ENCODE measurements at regions of chr14 and their contacts with region 1.

Region 1: GRCh38 chr14:99266181-99267178 is 5.5 kb downstream of the BCL11B start:
- DNase-seq: peak; percentile 79 to 95 (median 88)
- ATAC-seq: peak; percentile 25 to 42 (median 40)
- H3K4me3 ChIP-seq: peak overlapping the region; percentile 66 to 90
- H3K4me3 Mint-ChIP-seq: peak overlapping the region; percentile 94 to 98 (median 96)
- H3K27ac ChIP-seq: peak overlapping the region; percentile 99
- H3K27ac Mint-ChIP-seq: peak overlapping the region; percentile 99 to 100
- H3K4me1 ChIP-seq: peaks cover 33 to 54% of the 10 kb centered on the region in 2 experiments
- H3K4me1 Mint-ChIP-seq: peaks cover 60 to 72% (median 62%) of the 10 kb centered on the region in 3 donors
- H3K27me3 ChIP-seq: no peaks in the 10 kb centered on the region
- H3K27me3 Mint-ChIP-seq: no peaks in the 10 kb centered on the region

Region 2: DNA sequence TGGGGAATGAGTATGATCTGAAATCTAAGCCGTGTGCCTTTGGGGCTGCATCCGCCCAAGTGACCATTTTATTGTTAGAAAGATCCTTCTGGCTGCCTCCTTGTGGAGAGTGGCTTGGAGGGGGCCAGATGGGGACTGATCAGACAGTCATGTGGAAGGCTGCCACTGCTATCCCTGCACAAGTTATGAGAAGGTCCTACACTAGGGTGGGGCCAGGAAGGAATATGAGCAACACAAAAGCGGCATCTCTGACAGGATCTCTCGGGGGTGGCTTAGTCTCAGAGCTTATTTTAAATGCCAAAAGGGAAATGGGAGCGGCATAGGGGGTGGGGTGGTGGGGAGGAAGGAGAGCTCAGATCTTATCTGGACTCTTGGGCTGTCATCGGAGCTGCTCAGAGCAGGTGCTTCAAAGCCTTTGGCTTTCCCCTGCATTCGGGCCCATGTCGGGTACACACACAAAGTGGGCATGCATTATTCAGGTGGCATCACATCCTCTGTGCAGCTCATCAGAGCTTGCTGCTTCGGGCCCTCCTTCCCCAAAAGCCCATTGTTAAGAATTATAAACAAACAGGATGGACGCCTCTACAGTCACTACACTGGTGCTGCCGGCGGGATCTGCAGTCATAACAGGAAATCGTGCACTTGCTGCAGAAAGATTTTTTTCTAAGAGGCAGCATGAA is 1663.9 kb before region 1 on chr14:
- CTCF ChIA-PET with region 1: interaction called in 1 of 2 experiments, 3 read pairs
- POLR2A ChIA-PET with region 1: interaction called in 1 of 2 experiments, 11 read pairs
- DNase-seq: peak; percentile 67 to 92 (median 80)
- ATAC-seq: peak; percentile 91 to 92 (median 91)
- H3K4me3 ChIP-seq: peak overlapping the region; percentile 29 to 31
- H3K4me3 Mint-ChIP-seq: no peak overlapping the region
- H3K27ac ChIP-seq: peak overlapping the region; percentile 93
- H3K27ac Mint-ChIP-seq: no peak overlapping the region
- H3K4me1 ChIP-seq: peaks cover 40 to 50% of the 10 kb centered on the region in 2 experiments
- H3K4me1 Mint-ChIP-seq: peaks cover 6 to 40% (median 7%) of the 10 kb centered on the region in 3 donors
- H3K27me3 ChIP-seq: no peaks in the 10 kb centered on the region
- H3K27me3 Mint-ChIP-seq: no peaks in the 10 kb centered on the region

Region 3: DNA sequence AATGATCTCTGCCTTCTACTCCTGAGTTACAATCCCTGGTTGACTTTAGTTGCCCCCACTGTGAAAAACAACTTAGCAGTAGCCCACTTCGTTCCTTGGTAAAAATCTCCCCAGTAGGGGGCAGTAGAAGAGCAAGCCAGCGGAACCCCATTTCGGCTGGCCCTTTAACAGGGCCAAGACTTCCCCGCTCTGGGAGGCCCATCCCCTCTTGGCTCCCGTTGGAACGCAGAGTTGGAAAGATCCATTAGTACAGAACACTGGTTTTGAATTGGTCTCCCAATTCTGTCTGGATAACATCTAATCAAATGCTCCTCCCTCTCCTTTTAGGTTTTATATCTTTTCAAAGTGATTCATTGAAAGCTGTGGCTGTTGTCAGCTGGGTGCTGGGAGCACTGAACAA is 1127.8 kb before region 1 on chr14:
- CTCF ChIA-PET with region 1: interaction called in 1 of 2 experiments, 15 read pairs
- POLR2A ChIA-PET with region 1: interaction called in 1 of 2 experiments, 3 read pairs
- DNase-seq: peak; percentile 31 to 89 (median 57)
- ATAC-seq: peak; percentile 55 to 60 (median 56)
- H3K4me3 ChIP-seq: peak overlapping the region in 1 of 2 donors; percentile 5
- H3K4me3 Mint-ChIP-seq: peak overlapping the region; percentile 58 to 88 (median 79)
- H3K27ac ChIP-seq: peak overlapping the region; percentile 55
- H3K27ac Mint-ChIP-seq: peak overlapping the region; percentile 92 to 97
- H3K4me1 ChIP-seq: peaks cover 63 to 78% of the 10 kb centered on the region in 2 experiments
- H3K4me1 Mint-ChIP-seq: peaks cover 88 to 95% (median 95%) of the 10 kb centered on the region in 3 donors
- H3K27me3 ChIP-seq: no peaks in the 10 kb centered on the region
- H3K27me3 Mint-ChIP-seq: no peaks in the 10 kb centered on the region

Region 4: GRCh38 chr14:99224116-99224910 is 42.2 kb before region 1 on chr14:
- CTCF ChIA-PET with region 1: interaction called, 3 to 48 read pairs
- POLR2A ChIA-PET with region 1: interaction called, 3 to 4 read pairs
- DNase-seq: peak in 1 of 35 experiments; percentile 55
- ATAC-seq: peak in 1 of 4 experiments; percentile 13
- H3K4me3 ChIP-seq: no peak overlapping the region
- H3K4me3 Mint-ChIP-seq: peak overlapping the region; percentile 50 to 96 (median 70)
- H3K27ac ChIP-seq: peak overlapping the region; percentile 99
- H3K27ac Mint-ChIP-seq: peak overlapping the region; percentile 98 to 99
- H3K4me1 ChIP-seq: peaks cover 75 to 99% of the 10 kb centered on the region in 2 experiments
- H3K4me1 Mint-ChIP-seq: peaks cover 96 to 98% (median 96%) of the 10 kb centered on the region in 3 donors
- H3K27me3 ChIP-seq: no peaks in the 10 kb centered on the region
- H3K27me3 Mint-ChIP-seq: no peaks in the 10 kb centered on the region

Region 5: DNA sequence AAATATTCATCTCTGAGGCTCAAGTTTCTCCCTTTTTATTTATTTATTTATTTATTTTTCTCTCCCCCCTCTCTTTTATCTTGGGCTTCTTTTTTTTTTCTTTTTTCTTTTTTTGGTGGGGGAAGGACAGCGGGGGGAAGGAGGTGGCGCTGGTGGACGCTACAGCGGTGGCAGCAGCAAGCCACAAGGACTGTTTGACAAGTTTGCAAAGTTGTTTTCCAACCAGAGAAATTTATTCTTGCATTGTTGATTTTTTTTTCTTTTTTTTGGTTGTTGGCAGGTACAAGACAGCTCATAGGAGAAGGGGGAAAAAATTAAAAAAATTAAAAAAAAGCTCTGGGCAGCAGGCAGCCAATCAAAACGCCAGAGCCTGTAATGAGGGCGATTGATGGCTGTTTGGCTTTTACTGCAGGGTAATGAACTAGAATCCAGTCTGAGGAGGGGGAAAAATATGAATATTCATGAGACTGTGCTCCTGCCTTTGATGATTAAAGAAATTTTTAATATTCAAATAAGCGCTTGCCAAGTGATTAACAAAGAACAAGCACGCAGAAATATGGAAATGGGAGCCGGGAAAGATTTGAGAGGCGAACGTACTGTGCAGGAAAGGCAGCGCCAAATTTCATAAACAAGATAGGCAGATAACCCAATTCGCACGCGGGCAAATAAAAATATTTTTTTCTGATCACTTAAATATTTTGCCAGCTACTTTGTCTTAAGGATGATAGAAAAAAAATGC is 30.7 kb before region 1 on chr14:
- CTCF ChIA-PET with region 1: interaction called, 8 to 75 read pairs
- POLR2A ChIA-PET with region 1: interaction called, 10 to 40 read pairs
- DNase-seq: peak in 1 of 35 experiments; percentile 54
- ATAC-seq: peak in 1 of 4 experiments; percentile 4
- H3K4me3 ChIP-seq: peak overlapping the region; percentile 20 to 31
- H3K4me3 Mint-ChIP-seq: peak overlapping the region; percentile 78 to 96 (median 85)
- H3K27ac ChIP-seq: peak overlapping the region; percentile 99
- H3K27ac Mint-ChIP-seq: peak overlapping the region; percentile 98
- H3K4me1 ChIP-seq: peaks cover 87 to 96% of the 10 kb centered on the region in 2 experiments
- H3K4me1 Mint-ChIP-seq: peaks cover 94 to 96% (median 95%) of the 10 kb centered on the region in 3 donors
- H3K27me3 ChIP-seq: no peaks in the 10 kb centered on the region
- H3K27me3 Mint-ChIP-seq: no peaks in the 10 kb centered on the region

Region 6: GRCh38 chr14:99252940-99253868 is 13.3 kb before region 1 on chr14:
- CTCF ChIA-PET with region 1: interaction called in 1 of 2 experiments, 13 read pairs
- POLR2A ChIA-PET with region 1: interaction called, 4 to 12 read pairs
- DNase-seq: peak in 27 of 35 experiments; percentile 29 to 81 (median 60)
- ATAC-seq: peak; percentile 54 to 66 (median 60)
- H3K4me3 ChIP-seq: peak overlapping the region in 1 of 2 donors; percentile 31
- H3K4me3 Mint-ChIP-seq: peak overlapping the region; percentile 80 to 96 (median 81)
- H3K27ac ChIP-seq: peak overlapping the region; percentile 99
- H3K27ac Mint-ChIP-seq: peak overlapping the region; percentile 99 to 100
- H3K4me1 ChIP-seq: peaks cover 91 to 100% of the 10 kb centered on the region in 2 experiments
- H3K4me1 Mint-ChIP-seq: peaks cover 98% of the 10 kb centered on the region in 3 donors
- H3K27me3 ChIP-seq: no peaks in the 10 kb centered on the region
- H3K27me3 Mint-ChIP-seq: no peaks in the 10 kb centered on the region

Measured in T-cell (primary cell).